Endothelial cell of umbilical vein (primary cell): ENCODE measurements at regions of chr2 and their contacts with region 1.

Region 1: DNA sequence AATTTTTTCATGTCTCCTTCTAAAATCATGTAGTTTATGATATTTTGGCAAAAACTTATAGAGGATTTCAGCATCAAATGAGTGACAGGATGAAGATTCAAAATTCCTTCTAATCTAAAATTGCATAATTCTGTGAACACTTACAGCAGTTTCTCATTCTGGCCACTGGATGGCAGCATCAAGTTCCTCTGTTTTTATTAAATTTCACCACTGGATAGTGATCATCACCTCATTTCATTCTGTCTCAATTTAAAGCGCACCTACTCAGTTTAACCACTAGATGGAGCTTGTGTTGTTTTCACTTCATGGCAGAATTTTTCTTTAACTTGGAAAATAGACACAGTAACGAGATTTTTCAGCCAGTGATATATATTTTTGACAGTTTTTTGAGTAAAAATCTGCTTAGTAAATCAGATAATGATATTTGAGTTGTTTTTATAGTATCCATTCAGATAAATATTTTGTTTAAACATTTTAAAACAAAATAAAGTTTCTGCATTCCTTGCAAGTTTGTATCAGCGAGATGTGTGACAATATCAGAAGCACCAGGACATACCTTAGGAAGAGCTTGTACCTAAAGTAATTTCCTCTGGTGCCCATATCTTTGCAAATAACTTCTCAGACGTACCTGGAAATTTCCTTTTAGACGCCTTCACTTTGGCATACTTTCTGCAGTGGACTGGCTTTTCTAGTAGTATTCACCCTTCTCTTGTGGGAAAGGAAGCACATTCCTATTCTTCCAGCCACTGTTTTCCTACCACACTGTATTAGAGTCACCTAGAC is 94.7 kb upstream of the ARHGAP15 start:
- DNase-seq: peak; percentile 80
- H3K4me3 ChIP-seq: no peak overlapping the region
- H3K27ac ChIP-seq: no peak overlapping the region
- H3K4me1 ChIP-seq: peaks cover 2% of the 10 kb centered on the region
- H3K27me3 ChIP-seq: no peaks in the 10 kb centered on the region
- CTCF ChIP-seq: peak; percentile 66 to 94
- POLR2A ChIP-seq: no peak

Region 2: GRCh38 chr2:143051465-143051864 is 17.0 kb after region 1 on chr2:
- CTCF ChIA-PET with region 1: interaction called, 27 read pairs
- POLR2A ChIA-PET with region 1: no interaction called
- dilution Hi-C with region 1: no loop called
- intact Hi-C with region 1: no loop called
- DNase-seq: no peak
- H3K4me3 ChIP-seq: no peak overlapping the region
- H3K27ac ChIP-seq: no peak overlapping the region
- H3K4me1 ChIP-seq: no peaks in the 10 kb centered on the region
- H3K27me3 ChIP-seq: no peaks in the 10 kb centered on the region
- CTCF ChIP-seq: no peak
- POLR2A ChIP-seq: no peak

Region 3: DNA sequence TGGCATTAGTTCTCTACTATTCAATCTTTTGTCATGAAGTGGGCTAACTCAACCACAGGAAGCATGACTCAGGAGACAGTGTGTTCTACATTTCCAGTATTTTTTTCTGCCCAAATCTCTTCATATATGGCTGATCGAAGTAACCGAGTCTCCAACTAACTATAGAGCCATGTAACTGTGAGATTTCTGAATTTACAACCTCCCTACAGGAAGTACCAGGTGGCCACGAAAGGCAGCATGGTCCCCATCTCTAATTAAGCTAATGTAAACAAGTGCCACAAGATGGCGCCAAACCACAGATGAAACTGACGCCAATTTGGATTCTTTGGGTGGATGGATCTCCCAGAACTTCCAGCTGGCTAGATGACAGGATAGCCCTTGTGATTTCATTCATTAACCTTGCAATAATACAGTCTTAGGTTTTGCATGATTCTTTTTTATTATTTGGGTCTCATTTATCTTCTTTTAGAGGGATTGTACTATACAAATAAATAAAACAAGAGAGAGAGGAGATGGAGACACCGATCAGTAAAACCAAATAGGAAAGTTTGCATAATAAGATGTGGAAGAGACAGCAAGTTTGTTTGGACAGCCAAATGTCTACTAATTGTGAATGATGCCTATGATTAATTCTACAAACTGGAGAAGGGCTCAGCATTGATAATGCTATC is 76.4 kb after region 1 on chr2:
- CTCF ChIA-PET with region 1: interaction called, 17 read pairs
- POLR2A ChIA-PET with region 1: no interaction called
- dilution Hi-C with region 1: no loop called
- intact Hi-C with region 1: loop called (anchors 1 kb)
- DNase-seq: peak; percentile 63
- H3K4me3 ChIP-seq: no peak overlapping the region
- H3K27ac ChIP-seq: peak overlapping the region; percentile 41
- H3K4me1 ChIP-seq: peaks cover 3% of the 10 kb centered on the region
- H3K27me3 ChIP-seq: no peaks in the 10 kb centered on the region
- CTCF ChIP-seq: peak; percentile 66 to 70
- POLR2A ChIP-seq: no peak

Region 4: GRCh38 chr2:143217512-143218115 is 183.1 kb after region 1 on chr2:
- CTCF ChIA-PET with region 1: interaction called, 73 read pairs
- POLR2A ChIA-PET with region 1: no interaction called
- dilution Hi-C with region 1: no loop called
- intact Hi-C with region 1: loop called (anchors 1 kb)
- DNase-seq: no peak
- H3K4me3 ChIP-seq: no peak overlapping the region
- H3K27ac ChIP-seq: no peak overlapping the region
- H3K4me1 ChIP-seq: no peaks in the 10 kb centered on the region
- H3K27me3 ChIP-seq: no peaks in the 10 kb centered on the region
- CTCF ChIP-seq: no peak
- POLR2A ChIP-seq: no peak

Region 5: GRCh38 chr2:143252138-143252907 is 217.8 kb after region 1 on chr2:
- CTCF ChIA-PET with region 1: interaction called, 122 read pairs
- POLR2A ChIA-PET with region 1: no interaction called
- dilution Hi-C with region 1: no loop called
- intact Hi-C with region 1: no loop called
- DNase-seq: no peak
- H3K4me3 ChIP-seq: no peak overlapping the region
- H3K27ac ChIP-seq: no peak overlapping the region
- H3K4me1 ChIP-seq: no peaks in the 10 kb centered on the region
- H3K27me3 ChIP-seq: no peaks in the 10 kb centered on the region
- CTCF ChIP-seq: no peak
- POLR2A ChIP-seq: no peak

Region 6: GRCh38 chr2:143284087-143284675 is 249.7 kb after region 1 on chr2:
- CTCF ChIA-PET with region 1: interaction called, 17 read pairs
- POLR2A ChIA-PET with region 1: no interaction called
- dilution Hi-C with region 1: no loop called
- intact Hi-C with region 1: no loop called
- DNase-seq: peak; percentile 40
- H3K4me3 ChIP-seq: no peak overlapping the region
- H3K27ac ChIP-seq: no peak overlapping the region
- H3K4me1 ChIP-seq: no peaks in the 10 kb centered on the region
- H3K27me3 ChIP-seq: no peaks in the 10 kb centered on the region
- CTCF ChIP-seq: peak; percentile 78 to 84
- POLR2A ChIP-seq: no peak

Region 7: DNA sequence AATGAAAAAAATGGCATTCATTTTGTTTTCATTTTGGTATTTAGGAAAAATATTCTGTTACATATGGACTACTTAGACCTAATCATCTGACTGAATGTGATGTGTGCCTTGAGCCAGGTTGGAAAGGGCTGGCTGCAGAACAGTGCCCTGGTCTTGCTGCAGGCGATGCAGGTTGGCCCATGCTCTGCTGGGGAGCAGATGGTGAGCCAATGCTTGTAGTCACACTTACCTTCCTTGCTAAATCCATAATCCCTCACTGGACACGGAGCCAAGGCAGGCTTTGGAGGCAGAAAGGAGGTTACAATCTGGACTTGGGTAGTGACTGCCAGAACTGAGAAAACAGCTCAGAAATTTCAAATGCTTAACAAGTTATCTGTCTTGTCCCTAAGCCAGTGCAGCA is 323.5 kb after region 1 on chr2:
- CTCF ChIA-PET with region 1: no interaction called
- POLR2A ChIA-PET with region 1: no interaction called
- dilution Hi-C with region 1: no loop called
- intact Hi-C with region 1: no loop called
- DNase-seq: no peak
- H3K4me3 ChIP-seq: no peak overlapping the region
- H3K27ac ChIP-seq: no peak overlapping the region
- H3K4me1 ChIP-seq: no peaks in the 10 kb centered on the region
- H3K27me3 ChIP-seq: no peaks in the 10 kb centered on the region
- CTCF ChIP-seq: no peak
- POLR2A ChIP-seq: no peak